ENCODE measurements at regions of chr2 and their contacts with region 1.

Region 1: GRCh38 chr2:63698825-63699548 is 110.2 kb downstream of the MDH1 start:
- DNase-seq: peak; percentile 42
- H3K4me3 ChIP-seq: no peak overlapping the region; a peak in 1 of 4 replicates
- H3K27ac ChIP-seq: peak overlapping the region; percentile 29 to 56; a peak in 3 of 4 replicates
- H3K4me1 ChIP-seq: peaks cover 5 to 9% of the 10 kb centered on the region in 2 experiments; a peak in 3 of 4 replicates
- H3K27me3 ChIP-seq: no peaks in the 10 kb centered on the region
- CTCF ChIP-seq: peak; percentile 71
- EP300 ChIP-seq: peak in 1 of 2 experiments; percentile 22; a peak in 1 of 4 replicates
- RAD21 ChIP-seq: peak; percentile 78

Region 2: GRCh38 chr2:63710732-63711131 is 11.7 kb after region 1 on chr2:
- CTCF ChIA-PET with region 1: interaction called, 11 read pairs
- POLR2A ChIA-PET with region 1: no interaction called
- DNase-seq: no peak
- H3K4me3 ChIP-seq: no peak overlapping the region
- H3K27ac ChIP-seq: no peak overlapping the region
- H3K4me1 ChIP-seq: no peaks in the 10 kb centered on the region
- H3K27me3 ChIP-seq: no peaks in the 10 kb centered on the region
- CTCF ChIP-seq: no peak
- EP300 ChIP-seq: no peak
- RAD21 ChIP-seq: no peak

Region 3: GRCh38 chr2:63888490-63889402 is 189.8 kb after region 1 on chr2:
- CTCF ChIA-PET with region 1: interaction called, 11 read pairs
- POLR2A ChIA-PET with region 1: no interaction called
- DNase-seq: peak; percentile 61
- H3K4me3 ChIP-seq: peak overlapping the region in 1 of 2 experiments; percentile 10; a peak in 1 of 4 replicates
- H3K27ac ChIP-seq: peak overlapping the region in 1 of 2 experiments; percentile 40; a peak in 1 of 4 replicates
- H3K4me1 ChIP-seq: no peaks in the 10 kb centered on the region
- H3K27me3 ChIP-seq: no peaks in the 10 kb centered on the region
- CTCF ChIP-seq: peak; percentile 83
- EP300 ChIP-seq: no peak
- RAD21 ChIP-seq: peak; percentile 84

Region 4: DNA sequence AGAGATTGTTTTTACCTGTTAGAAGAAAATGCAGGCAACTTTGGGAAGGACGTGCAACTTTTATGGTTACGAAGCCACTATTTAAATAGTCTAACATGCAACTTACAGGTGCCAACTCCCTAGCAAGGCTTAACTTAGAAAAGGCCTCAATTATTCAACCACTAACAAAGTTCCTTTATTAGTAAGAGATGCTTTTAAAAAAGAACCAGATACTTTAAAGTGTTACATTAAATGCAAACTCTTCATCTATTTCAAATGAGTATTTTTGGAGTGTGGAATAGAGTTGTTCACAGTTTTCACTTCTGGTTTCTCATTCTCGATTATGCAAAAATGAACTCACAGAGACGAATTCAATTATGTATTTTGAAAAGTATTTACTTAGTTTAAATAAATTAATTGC is 393.5 kb after region 1 on chr2:
- CTCF ChIA-PET with region 1: no interaction called
- POLR2A ChIA-PET with region 1: no interaction called
- DNase-seq: no peak
- H3K4me3 ChIP-seq: no peak overlapping the region
- H3K27ac ChIP-seq: no peak overlapping the region
- H3K4me1 ChIP-seq: no peaks in the 10 kb centered on the region
- H3K27me3 ChIP-seq: no peaks in the 10 kb centered on the region
- CTCF ChIP-seq: no peak
- EP300 ChIP-seq: no peak
- RAD21 ChIP-seq: no peak

Measured in SK-N-SH (cell line).